A549 (cell line): ENCODE measurements at regions of chr9 and their contacts with region 1.

Region 1: GRCh38 chr9:126704873-126705766 is 91.4 kb downstream of the LMX1B start:
- DNase-seq: peak; percentile 71 to 84
- ATAC-seq: peak; percentile 48 to 82
- H3K4me3 ChIP-seq: peak overlapping the region; percentile 26
- H3K27ac ChIP-seq: peak overlapping the region; percentile 56 to 75; a peak in 5 of 6 replicates
- H3K4me1 ChIP-seq: peaks cover 12% of the 10 kb centered on the region
- CTCF ChIP-seq: peak; percentile 80
- EP300 ChIP-seq: no peak
- POLR2A ChIP-seq: no peak
- RAD21 ChIP-seq: peak; percentile 60 to 64; a peak in 4 of 5 replicates

Region 2: GRCh38 chr9:126661521-126662220 is 43.4 kb before region 1 on chr9:
- CTCF ChIA-PET with region 1: interaction called, 16 read pairs
- POLR2A ChIA-PET with region 1: no interaction called
- DNase-seq: peak in 1 of 2 experiments; percentile 13
- ATAC-seq: peak in 1 of 2 experiments; percentile 27; a peak in 3 of 6 replicates
- H3K4me3 ChIP-seq: no peak overlapping the region
- H3K27ac ChIP-seq: no peak overlapping the region
- H3K4me1 ChIP-seq: no peaks in the 10 kb centered on the region
- CTCF ChIP-seq: no peak
- EP300 ChIP-seq: no peak
- POLR2A ChIP-seq: no peak
- RAD21 ChIP-seq: no peak

Region 3: GRCh38 chr9:126690431-126691350 is 14.4 kb before region 1 on chr9:
- CTCF ChIA-PET with region 1: interaction called, 102 read pairs
- POLR2A ChIA-PET with region 1: no interaction called
- DNase-seq: peak; percentile 51 to 76
- ATAC-seq: peak; percentile 51 to 87; a peak in 4 of 6 replicates
- H3K4me3 ChIP-seq: no peak overlapping the region
- H3K27ac ChIP-seq: no peak overlapping the region
- H3K4me1 ChIP-seq: no peaks in the 10 kb centered on the region
- CTCF ChIP-seq: peak; percentile 71
- EP300 ChIP-seq: no peak
- POLR2A ChIP-seq: no peak
- RAD21 ChIP-seq: peak; percentile 37 to 49; a peak in 4 of 5 replicates

Region 4: GRCh38 chr9:126733005-126733404 is 27.9 kb after region 1 on chr9:
- CTCF ChIA-PET with region 1: interaction called, 15 read pairs
- POLR2A ChIA-PET with region 1: no interaction called
- DNase-seq: no peak
- ATAC-seq: no peak
- H3K4me3 ChIP-seq: no peak overlapping the region
- H3K27ac ChIP-seq: no peak overlapping the region
- H3K4me1 ChIP-seq: no peaks in the 10 kb centered on the region
- CTCF ChIP-seq: no peak
- EP300 ChIP-seq: no peak
- POLR2A ChIP-seq: no peak
- RAD21 ChIP-seq: no peak

Region 5: DNA sequence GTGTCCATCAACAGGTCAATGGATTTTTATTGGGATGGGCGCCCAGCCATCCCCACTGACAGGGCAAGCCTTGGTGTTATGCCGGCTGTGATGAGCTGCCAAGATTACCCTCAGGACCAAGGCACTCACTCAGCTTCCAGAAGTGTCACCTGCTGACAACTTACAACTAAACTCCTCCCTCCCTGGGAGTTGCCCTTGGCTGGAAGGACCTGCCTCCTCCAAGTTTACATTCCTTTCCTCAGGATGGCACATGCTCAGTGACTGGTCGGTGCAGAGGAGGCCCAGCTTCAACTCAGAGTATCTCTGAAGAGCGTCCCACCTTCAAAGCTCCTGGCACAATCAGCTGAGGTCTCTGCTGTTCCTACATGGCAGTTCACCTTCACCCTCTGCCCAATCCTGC is 47.3 kb after region 1 on chr9:
- CTCF ChIA-PET with region 1: interaction called, 16 read pairs
- POLR2A ChIA-PET with region 1: no interaction called
- DNase-seq: no peak
- ATAC-seq: peak; percentile 44 to 56; a peak in 3 of 6 replicates
- H3K4me3 ChIP-seq: no peak overlapping the region
- H3K27ac ChIP-seq: no peak overlapping the region
- H3K4me1 ChIP-seq: no peaks in the 10 kb centered on the region
- CTCF ChIP-seq: no peak
- EP300 ChIP-seq: no peak
- POLR2A ChIP-seq: no peak
- RAD21 ChIP-seq: no peak

Region 6: GRCh38 chr9:126781186-126782052 is 76.3 kb after region 1 on chr9:
- CTCF ChIA-PET with region 1: interaction called, 338 read pairs
- POLR2A ChIA-PET with region 1: interaction called, 6 read pairs
- DNase-seq: peak; percentile 73 to 78
- ATAC-seq: peak; percentile 92 to 98
- H3K4me3 ChIP-seq: peak overlapping the region; percentile 32
- H3K27ac ChIP-seq: peak overlapping the region; percentile 64 to 83; a peak in 5 of 6 replicates
- H3K4me1 ChIP-seq: 0 out of 3 replicates have a peak, but pooled peaks cover 4% of the 10 kb centered on the region
- CTCF ChIP-seq: peak; percentile 92
- EP300 ChIP-seq: no peak
- POLR2A ChIP-seq: no peak
- RAD21 ChIP-seq: peak; percentile 92 to 97

Region 7: DNA sequence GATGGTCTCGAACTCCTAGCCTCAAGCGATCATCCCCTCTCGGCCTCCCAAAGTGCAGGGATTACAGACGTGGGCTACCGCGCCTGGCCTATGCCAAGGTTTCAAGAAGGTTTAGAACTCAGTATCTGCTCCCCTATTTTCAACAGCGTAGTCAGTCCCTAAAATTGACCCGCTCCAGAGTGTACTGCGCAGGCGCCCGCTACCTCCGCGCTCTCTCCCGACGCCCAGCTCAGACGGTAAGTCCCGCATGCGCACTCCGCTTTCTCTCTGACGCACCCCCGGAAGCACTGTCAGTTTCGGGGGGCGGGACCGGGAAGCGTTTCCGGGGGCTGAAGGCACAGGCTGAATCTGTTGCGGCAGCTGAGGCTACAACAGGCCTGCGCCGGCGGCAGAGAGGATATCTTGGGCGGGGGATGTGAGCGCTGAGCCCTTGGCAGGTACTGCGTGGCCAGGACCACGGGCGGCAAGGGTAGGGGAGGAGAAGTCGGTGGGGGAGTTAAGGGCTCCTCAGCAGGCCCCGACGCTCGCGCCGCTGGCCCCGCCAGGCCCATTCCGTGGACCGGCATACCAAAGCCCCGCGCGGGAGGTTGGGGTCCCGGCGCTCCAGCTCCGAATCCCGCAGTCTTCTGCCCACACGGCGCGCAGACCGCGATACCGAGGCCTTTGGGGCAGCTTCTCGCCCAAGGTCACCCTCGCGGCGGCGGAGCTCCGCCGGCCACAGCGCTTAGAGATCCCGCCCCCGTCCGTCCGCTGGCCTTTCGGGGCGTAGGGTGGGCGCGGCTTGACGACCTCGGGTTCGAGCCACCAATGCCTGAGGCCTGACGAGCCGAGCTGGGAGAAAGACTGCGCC is 99.8 kb after region 1 on chr9 and contains the start of gene ZBTB43:
- CTCF ChIA-PET with region 1: interaction called, 12 read pairs
- POLR2A ChIA-PET with region 1: no interaction called
- DNase-seq: peak; percentile 95 to 98
- ATAC-seq: peak; percentile 97
- H3K4me3 ChIP-seq: peak within 1 kb of the TSS; percentile 73
- H3K27ac ChIP-seq: peak within 1 kb of the TSS; percentile 76 to 94
- H3K4me1 ChIP-seq: peaks cover 28% of the 10 kb centered on the region
- CTCF ChIP-seq: no peak
- EP300 ChIP-seq: no peak
- POLR2A ChIP-seq: 0 out of 2 replicates have a peak, but pooled peaks have one; percentile 63
- RAD21 ChIP-seq: no peak
- polyA plus RNA-seq, gene ZBTB43: 9.9 and 11.7 TPM in 2 replicates

Region 8: DNA sequence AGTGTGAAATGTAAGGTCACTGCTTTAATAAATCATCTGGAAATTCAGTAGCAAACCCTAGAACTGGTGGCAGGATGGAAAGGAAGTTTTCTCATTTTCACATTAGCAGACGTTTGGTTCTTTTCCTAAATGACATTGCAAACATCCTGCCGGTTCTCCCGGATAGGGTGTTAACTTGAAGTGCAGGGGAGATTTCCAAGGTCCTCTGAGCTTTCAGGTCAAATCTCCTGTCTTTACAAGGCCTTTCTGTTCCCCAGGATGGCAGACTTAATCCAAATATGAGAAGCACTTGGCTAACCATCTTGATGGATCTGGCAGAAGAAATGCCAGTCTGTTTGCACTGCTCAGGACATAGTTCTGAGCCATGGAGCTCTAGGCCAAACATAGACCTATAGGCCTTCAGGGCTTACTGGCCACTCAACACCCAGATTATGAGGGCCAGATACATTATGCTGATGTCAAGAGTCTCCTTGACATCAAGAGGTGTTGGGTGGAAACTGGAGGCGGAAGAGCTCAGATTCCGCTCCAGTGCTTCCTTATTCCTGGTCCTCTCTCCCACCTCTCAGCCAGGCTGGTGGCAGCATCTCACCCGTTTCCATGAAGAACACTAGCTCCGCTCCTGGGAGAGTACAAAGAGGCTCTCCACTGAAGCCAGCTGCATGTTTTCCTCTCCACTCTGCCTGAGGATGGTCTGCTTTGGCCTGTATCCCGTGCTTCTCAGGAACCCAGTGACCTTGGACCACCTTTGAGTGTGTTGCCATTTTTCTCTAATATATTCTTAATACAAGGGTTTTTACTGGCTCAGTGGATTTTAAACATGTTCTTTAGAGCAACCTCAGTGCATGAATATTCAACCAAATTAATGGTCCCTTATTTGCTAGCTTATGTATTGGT is 270.5 kb after region 1 on chr9:
- CTCF ChIA-PET with region 1: no interaction called
- POLR2A ChIA-PET with region 1: no interaction called
- DNase-seq: no peak
- ATAC-seq: no peak
- H3K4me3 ChIP-seq: no peak overlapping the region
- H3K27ac ChIP-seq: no peak overlapping the region
- H3K4me1 ChIP-seq: no peaks in the 10 kb centered on the region
- CTCF ChIP-seq: no peak
- EP300 ChIP-seq: no peak
- POLR2A ChIP-seq: no peak
- RAD21 ChIP-seq: no peak